Calu3 (cell line): ENCODE measurements at regions of chr1 and their contacts with region 1.

Region 1: DNA sequence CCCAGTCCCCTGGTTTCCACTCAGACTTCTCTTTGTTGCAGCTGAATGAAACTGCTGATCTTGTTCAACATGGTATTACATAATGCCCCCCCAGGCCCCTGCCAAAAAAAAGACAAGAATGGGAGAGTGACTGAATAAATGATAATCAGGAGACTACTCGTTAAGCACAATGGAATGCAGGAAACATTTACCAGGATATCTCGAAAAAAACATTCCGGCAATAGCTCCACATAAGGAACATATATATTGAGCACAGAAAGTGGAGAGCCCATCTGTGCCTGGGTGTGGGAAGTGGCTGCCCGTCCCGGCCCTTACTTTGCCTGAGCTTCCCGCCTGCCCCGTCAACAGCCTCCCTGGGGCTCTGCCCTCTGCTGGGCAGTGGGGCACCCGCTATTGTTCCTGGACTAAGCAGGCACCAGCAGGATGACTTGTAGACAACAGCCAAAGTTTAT is 13.4 kb downstream of the TRIM11 start:
- DNase-seq: peak; percentile 78
- H3K4me3 Mint-ChIP-seq: no peak overlapping the region
- H3K27ac Mint-ChIP-seq: peak overlapping the region; percentile 48
- H3K4me1 Mint-ChIP-seq: peaks cover 10% of the 10 kb centered on the region
- H3K27me3 Mint-ChIP-seq: no peaks in the 10 kb centered on the region
- CTCF ChIP-seq: peak; percentile 61

Region 2: GRCh38 chr1:228139944-228140656 is 253.2 kb before region 1 on chr1 and contains the start of gene GUK1:
- CTCF ChIA-PET with region 1: interaction called, 4 read pairs
- intact Hi-C with region 1: loop called (anchors 10 kb)
- DNase-seq: peak; percentile 100
- H3K4me3 Mint-ChIP-seq: peak within 1 kb of the TSS; percentile 84
- H3K27ac Mint-ChIP-seq: peak within 1 kb of the TSS; percentile 94
- H3K4me1 Mint-ChIP-seq: peaks cover 20% of the 10 kb centered on the region
- H3K27me3 Mint-ChIP-seq: no peaks in the 10 kb centered on the region
- CTCF ChIP-seq: no peak
- total RNA-seq, gene GUK1: 238 and 262 TPM in 2 replicates

Region 3: DNA sequence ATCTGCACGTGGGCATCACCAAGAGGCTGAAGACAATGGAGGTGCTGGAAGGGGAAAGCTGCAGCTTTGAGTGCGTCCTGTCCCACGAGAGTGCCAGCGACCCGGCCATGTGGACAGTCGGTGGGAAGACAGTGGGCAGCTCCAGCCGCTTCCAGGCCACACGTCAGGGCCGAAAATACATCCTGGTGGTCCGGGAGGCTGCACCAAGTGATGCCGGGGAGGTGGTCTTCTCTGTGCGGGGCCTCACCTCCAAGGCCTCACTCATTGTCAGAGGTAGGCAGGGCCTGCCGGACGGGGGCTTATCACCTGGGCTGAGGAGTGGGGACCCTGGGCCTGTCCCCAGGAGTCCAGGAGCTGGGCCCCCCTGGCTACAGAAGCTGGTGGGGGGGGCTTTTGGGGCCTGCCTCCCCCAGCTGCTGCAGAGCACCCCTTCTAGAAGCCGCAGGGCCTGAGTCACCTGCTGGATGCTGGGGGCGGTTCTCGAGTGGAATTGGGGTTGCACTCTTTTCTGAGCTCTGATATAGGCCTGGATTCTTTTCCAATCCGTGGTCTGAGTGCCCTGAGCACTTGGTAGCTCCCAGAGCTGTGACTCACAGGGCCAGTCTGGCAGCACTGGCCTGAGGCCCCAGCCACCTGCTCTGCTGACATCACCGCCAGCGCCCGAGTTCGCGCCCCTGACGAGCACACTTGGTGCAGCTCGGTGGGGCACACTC is 111.2 kb before region 1 on chr1:
- CTCF ChIA-PET with region 1: no interaction called
- intact Hi-C with region 1: no loop called
- DNase-seq: no peak
- H3K4me3 Mint-ChIP-seq: no peak overlapping the region
- H3K27ac Mint-ChIP-seq: no peak overlapping the region
- H3K4me1 Mint-ChIP-seq: no peaks in the 10 kb centered on the region
- H3K27me3 Mint-ChIP-seq: no peaks in the 10 kb centered on the region
- CTCF ChIP-seq: no peak

Region 4: DNA sequence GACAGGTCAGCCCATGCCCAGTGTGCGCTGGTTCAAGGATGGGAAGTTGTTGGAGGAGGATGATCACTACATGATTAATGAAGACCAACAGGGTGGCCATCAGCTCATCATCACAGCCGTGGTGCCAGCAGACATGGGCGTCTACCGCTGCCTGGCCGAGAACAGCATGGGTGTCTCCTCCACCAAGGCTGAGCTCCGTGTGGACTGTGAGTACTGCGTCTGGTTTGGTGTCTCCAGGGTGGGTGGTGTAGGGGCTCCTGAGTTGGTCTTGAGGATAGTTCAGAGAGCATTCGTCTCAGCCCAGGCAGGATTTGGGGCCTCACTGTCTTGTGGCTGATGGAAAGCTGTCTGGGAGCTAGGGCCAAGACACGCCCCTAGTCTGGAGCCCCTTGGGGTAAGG is 69.9 kb before region 1 on chr1:
- CTCF ChIA-PET with region 1: no interaction called
- intact Hi-C with region 1: no loop called
- DNase-seq: no peak
- H3K4me3 Mint-ChIP-seq: no peak overlapping the region
- H3K27ac Mint-ChIP-seq: no peak overlapping the region
- H3K4me1 Mint-ChIP-seq: no peaks in the 10 kb centered on the region
- H3K27me3 Mint-ChIP-seq: no peaks in the 10 kb centered on the region
- CTCF ChIP-seq: no peak

Region 5: GRCh38 chr1:228340686-228341449 is 52.4 kb before region 1 on chr1:
- CTCF ChIA-PET with region 1: no interaction called
- intact Hi-C with region 1: loop called (anchors 2 kb)
- DNase-seq: peak; percentile 73
- H3K4me3 Mint-ChIP-seq: peak overlapping the region; percentile 61
- H3K27ac Mint-ChIP-seq: no peak overlapping the region
- H3K4me1 Mint-ChIP-seq: no peaks in the 10 kb centered on the region
- H3K27me3 Mint-ChIP-seq: no peaks in the 10 kb centered on the region
- CTCF ChIP-seq: peak; percentile 83

Region 6: GRCh38 chr1:228493141-228494043 is 100.1 kb after region 1 on chr1:
- CTCF ChIA-PET with region 1: no interaction called
- intact Hi-C with region 1: no loop called
- DNase-seq: no peak
- H3K4me3 Mint-ChIP-seq: no peak overlapping the region
- H3K27ac Mint-ChIP-seq: no peak overlapping the region
- H3K4me1 Mint-ChIP-seq: peaks cover 14% of the 10 kb centered on the region
- H3K27me3 Mint-ChIP-seq: no peaks in the 10 kb centered on the region
- CTCF ChIP-seq: no peak